Gastrocnemius medialis (tissue), 4 donors: ENCODE measurements at regions of chr11 and their contacts with region 1.

Region 1: DNA sequence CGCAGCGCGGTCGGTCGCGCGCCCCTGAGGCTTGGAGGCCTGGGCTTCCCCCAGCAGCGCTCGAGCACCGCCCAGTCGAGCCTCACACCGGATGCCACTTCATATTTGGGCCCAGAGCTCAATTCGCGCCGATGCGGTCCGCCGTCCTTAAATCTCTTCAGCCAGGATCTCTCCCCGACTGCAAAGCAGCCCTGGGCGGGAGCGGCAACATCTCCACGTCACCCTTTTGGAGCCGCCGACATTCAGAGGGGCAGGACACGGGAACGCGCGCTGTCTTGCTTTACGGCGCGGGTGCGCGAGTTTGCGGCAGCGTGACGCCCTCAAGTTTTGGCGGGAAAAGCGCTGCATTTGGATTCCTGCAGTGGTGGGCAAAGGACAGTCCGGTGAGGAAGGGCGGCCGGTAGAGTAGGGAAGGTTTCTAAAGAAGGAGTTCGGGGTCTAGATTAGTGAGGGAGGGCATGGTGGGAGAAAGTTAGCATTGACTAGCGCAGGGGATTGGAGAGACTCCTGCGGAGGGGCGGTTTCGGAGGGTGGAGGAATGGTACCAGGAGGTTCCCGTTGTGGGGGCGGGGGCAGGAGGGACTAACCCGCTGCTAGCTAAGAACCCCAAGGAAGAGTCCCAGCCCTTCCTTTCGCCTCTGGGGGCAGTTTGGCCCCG is 796 bp downstream of the CHEK1 start:
- DNase-seq: peak; percentile 66 to 76
- ATAC-seq: peak; percentile 93
- H3K4me3 ChIP-seq: peak overlapping the region; percentile 74 to 85 (median 83)
- H3K27ac ChIP-seq: peak overlapping the region; percentile 89 to 97 (median 94)
- H3K4me1 ChIP-seq: peaks cover 13 to 16% of the 10 kb centered on the region in 2 donors
- H3K27me3 ChIP-seq: no peaks in the 10 kb centered on the region
- CTCF ChIP-seq: no peak
- POLR2A ChIP-seq: peak in 1 of 2 donors; percentile 34

Region 2: GRCh38 chr11:125496529-125496857 is 129.3 kb before region 1 on chr11:
- in situ Hi-C with region 1: no loop called
- intact Hi-C with region 1: loop called (anchors 2 kb)
- DNase-seq: no peak
- ATAC-seq: peak in 1 of 2 donors; percentile 4
- H3K4me3 ChIP-seq: peak overlapping the region; percentile 63 to 82 (median 66)
- H3K27ac ChIP-seq: peak overlapping the region in 2 of 4 donors; percentile 7 to 43
- H3K4me1 ChIP-seq: peaks cover 0 to 7% of the 10 kb centered on the region in 2 donors
- H3K27me3 ChIP-seq: peaks cover 4 to 32% (median 25%) of the 10 kb centered on the region in 3 donors
- CTCF ChIP-seq: no peak
- POLR2A ChIP-seq: no peak

Region 3: GRCh38 chr11:125568970-125569914 is 56.5 kb before region 1 on chr11 and contains the start of gene EI24:
- in situ Hi-C with region 1: no loop called
- intact Hi-C with region 1: loop called (anchors 1 kb)
- DNase-seq: peak; percentile 85 to 86
- ATAC-seq: peak; percentile 87 to 88
- H3K4me3 ChIP-seq: peak within 1 kb of the TSS; percentile 73 to 81 (median 73)
- H3K27ac ChIP-seq: peak within 1 kb of the TSS; percentile 90 to 95 (median 94)
- H3K4me1 ChIP-seq: peaks cover 18 to 20% of the 10 kb centered on the region in 2 donors
- H3K27me3 ChIP-seq: no peaks in the 10 kb centered on the region
- CTCF ChIP-seq: peak; percentile 60 to 81 (median 73)
- POLR2A ChIP-seq: peak; percentile 91
- total RNA-seq, gene EI24: 88.9 to 140 (median 127) TPM

Region 4: DNA sequence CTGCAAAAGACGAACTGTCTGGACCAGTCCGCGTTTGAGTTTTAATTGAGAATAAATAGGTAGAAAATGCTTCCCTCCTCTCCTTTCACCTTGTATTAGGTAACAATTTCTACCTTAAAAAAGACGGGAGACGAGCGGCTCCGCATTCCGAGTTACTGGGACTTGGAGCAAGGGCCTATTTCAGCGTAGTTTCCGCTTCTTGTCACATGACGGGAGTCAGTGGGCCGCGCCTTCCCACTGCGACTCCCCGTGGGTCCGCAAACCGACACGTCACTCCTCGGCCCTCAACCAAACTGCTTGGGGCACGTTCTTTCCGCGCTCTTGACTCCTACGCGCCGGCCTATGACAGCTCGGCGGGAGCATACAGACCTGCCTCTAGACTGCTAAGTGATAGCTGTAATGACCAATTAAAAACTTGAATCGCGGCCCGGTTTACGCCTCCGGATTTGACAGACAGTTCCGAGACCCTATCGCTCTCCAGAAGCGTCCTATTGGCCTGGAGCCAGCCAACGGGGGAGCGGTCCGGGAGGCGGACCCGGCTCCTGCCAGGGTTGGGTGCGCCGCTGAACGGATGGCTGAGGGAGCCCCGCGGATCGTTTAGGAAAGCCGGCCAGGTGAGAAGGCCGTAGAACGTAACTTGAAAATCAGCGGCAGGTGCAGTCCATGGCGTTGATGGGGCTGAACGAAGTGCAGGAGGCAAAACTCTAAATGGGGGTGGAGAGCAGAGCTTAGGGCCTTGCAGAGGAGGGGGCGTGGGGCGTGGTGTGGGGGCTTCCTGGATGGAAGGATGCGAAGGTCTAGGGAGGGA is 33.2 kb before region 1 on chr11 and contains the start of gene STT3A:
- in situ Hi-C with region 1: no loop called
- intact Hi-C with region 1: loop called (anchors 1 kb)
- DNase-seq: peak; percentile 99 to 100
- ATAC-seq: peak; percentile 95 to 97
- H3K4me3 ChIP-seq: peak within 1 kb of the TSS; percentile 86 to 95 (median 90)
- H3K27ac ChIP-seq: peak within 1 kb of the TSS; percentile 89 to 99 (median 94)
- H3K4me1 ChIP-seq: peaks cover 17 to 24% of the 10 kb centered on the region in 2 donors
- H3K27me3 ChIP-seq: no peaks in the 10 kb centered on the region
- CTCF ChIP-seq: no peak
- POLR2A ChIP-seq: peak; percentile 86 to 90
- total RNA-seq, gene STT3A: 31.5 to 34.6 (median 32.9) TPM

Region 5: DNA sequence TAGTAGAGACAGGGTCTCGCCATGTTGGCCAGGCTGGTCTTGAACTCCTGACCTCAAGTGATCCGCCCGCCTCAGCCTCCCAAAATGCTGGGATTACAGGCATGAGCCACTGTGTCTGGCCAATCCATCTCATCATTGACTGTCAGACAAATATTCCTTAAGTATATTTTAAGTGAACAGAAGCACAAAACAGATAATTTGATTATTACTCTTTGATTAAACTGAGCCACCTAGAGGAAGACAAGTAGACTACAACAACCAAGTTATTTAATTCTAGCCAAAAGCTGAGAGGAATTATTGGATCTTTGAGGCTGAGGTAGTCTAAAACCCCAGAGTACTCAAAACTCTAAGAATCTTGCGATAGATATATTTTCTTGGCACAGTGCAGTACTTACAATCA is 53.6 kb after region 1 on chr11:
- in situ Hi-C with region 1: no loop called
- intact Hi-C with region 1: no loop called
- DNase-seq: no peak
- ATAC-seq: no peak
- H3K4me3 ChIP-seq: no peak overlapping the region
- H3K27ac ChIP-seq: no peak overlapping the region
- H3K4me1 ChIP-seq: no peaks in the 10 kb centered on the region
- H3K27me3 ChIP-seq: no peaks in the 10 kb centered on the region
- CTCF ChIP-seq: no peak
- POLR2A ChIP-seq: no peak

Region 6: DNA sequence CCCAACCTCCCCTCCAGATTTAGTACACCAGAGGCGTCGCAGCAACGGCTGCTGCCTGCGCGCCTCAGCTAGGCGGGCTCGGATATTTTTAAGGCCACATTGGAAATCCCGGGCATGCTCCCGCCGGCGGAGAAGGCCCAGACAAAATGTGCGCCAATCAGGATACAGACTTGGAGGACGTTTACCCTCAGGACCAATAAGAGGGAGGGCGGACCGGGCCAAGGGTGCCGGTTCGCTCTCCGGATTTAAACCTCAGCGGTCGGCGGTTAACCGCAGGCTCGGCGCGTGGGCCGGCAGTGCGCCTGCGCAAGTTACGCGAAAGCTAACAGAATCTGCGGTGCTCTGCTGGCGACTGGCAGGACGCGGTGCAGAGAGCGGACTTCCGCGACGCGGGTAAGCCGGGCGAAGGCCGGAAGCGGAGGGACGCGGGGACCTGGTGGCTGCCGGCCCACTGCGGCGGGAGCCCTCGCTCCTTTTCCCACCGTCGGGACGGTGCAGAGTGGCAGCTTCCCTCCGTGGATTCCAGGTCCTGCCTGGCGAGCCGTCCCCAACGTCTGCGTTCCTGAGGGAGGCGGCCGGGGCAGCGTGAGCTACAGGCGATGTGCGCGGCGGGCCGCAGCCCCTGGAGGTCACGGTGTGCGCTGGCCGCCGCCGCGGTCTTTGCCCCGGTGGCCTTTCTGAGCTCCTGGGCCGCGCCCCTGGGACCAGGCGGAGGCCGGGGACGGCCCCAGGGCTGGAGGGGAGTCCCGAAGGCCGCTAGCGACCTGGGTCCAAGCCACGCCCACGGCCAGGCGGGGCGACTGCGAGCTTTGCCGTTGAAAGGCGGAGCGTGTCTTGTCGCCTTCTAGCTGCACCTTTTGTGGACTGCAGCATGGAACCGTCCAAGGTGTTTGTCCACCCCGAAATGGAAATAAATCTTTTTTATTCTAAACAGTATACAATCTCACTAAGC is 261.9 kb after region 1 on chr11 and contains the start of gene HYLS1:
- in situ Hi-C with region 1: loop called in 2 of 4 experiments (anchors 25 kb)
- intact Hi-C with region 1: no loop called
- DNase-seq: peak; percentile 91 to 92
- ATAC-seq: peak; percentile 97
- H3K4me3 ChIP-seq: peak within 1 kb of the TSS; percentile 66 to 93 (median 80)
- H3K27ac ChIP-seq: peak within 1 kb of the TSS; percentile 81 to 95 (median 92)
- H3K4me1 ChIP-seq: peaks cover 0 to 5% of the 10 kb centered on the region in 2 donors
- H3K27me3 ChIP-seq: no peaks in the 10 kb centered on the region
- CTCF ChIP-seq: peak in 4 of 5 experiments; percentile 11 to 51 (median 40)
- POLR2A ChIP-seq: peak; percentile 52 to 76
- total RNA-seq, gene HYLS1: 0.56 to 3.9 (median 1.9) TPM

Region 7: GRCh38 chr11:126231725-126232459 is 606.1 kb after region 1 on chr11:
- in situ Hi-C with region 1: loop called in 1 of 4 experiments (anchors 25 kb)
- intact Hi-C with region 1: no loop called
- DNase-seq: no peak
- ATAC-seq: peak; percentile 51 to 66
- H3K4me3 ChIP-seq: no peak overlapping the region
- H3K27ac ChIP-seq: peak overlapping the region in 2 of 4 donors; percentile 11 to 28
- H3K4me1 ChIP-seq: peaks cover 12 to 20% of the 10 kb centered on the region in 2 donors
- H3K27me3 ChIP-seq: no peaks in the 10 kb centered on the region
- CTCF ChIP-seq: no peak
- POLR2A ChIP-seq: no peak